ENCODE measurements at regions of chr19 and their contacts with region 1.

Region 1: DNA sequence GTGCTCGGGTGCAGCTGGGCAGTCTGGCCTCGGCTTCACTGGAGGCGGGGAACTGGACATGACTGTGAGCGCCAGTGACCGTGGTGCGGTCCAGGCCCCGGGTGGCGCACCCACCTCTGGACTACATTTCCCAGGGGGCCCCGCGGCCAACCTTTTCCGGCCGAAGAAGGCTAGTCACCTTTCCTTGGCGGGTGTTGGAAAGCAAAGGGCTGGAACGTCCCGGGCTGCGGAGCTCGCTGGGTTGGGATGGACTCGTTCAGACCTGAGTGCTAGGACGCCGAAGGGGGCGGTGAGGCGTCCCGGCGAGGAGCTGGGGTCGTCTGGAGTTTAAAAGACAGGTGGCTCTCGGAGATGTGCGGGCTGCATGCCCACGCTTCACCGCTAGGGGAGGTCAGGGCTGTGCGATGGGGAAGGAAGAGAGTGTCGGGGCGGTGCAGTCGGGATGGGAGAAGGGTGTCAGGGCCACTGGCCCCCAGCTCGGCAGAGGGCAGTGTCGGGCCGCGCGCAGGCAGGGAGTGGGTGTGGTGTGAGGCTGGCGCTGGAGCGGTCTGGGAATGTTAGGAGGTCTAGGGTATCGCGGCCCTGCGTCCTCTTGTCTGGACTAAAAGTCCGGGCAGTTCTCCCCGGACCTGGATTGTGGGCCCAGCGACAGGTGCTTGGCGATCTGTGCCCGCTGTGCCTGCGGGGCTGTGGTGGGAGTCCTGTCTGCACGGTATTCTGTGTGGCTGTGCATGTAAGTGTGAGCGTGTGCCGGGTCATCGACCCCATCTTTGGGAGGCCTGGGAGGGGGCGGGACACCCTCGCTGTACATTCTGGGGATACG is 57.1 kb downstream of the ZNF568 start:
- DNase-seq: peak; percentile 92
- ATAC-seq: peak; percentile 98
- H3K4me3 Mint-ChIP-seq: peak overlapping the region; percentile 81
- H3K27ac Mint-ChIP-seq: peak overlapping the region; percentile 92
- H3K4me1 Mint-ChIP-seq: peaks cover 6% of the 10 kb centered on the region
- H3K27me3 Mint-ChIP-seq: no peaks in the 10 kb centered on the region

Region 2: DNA sequence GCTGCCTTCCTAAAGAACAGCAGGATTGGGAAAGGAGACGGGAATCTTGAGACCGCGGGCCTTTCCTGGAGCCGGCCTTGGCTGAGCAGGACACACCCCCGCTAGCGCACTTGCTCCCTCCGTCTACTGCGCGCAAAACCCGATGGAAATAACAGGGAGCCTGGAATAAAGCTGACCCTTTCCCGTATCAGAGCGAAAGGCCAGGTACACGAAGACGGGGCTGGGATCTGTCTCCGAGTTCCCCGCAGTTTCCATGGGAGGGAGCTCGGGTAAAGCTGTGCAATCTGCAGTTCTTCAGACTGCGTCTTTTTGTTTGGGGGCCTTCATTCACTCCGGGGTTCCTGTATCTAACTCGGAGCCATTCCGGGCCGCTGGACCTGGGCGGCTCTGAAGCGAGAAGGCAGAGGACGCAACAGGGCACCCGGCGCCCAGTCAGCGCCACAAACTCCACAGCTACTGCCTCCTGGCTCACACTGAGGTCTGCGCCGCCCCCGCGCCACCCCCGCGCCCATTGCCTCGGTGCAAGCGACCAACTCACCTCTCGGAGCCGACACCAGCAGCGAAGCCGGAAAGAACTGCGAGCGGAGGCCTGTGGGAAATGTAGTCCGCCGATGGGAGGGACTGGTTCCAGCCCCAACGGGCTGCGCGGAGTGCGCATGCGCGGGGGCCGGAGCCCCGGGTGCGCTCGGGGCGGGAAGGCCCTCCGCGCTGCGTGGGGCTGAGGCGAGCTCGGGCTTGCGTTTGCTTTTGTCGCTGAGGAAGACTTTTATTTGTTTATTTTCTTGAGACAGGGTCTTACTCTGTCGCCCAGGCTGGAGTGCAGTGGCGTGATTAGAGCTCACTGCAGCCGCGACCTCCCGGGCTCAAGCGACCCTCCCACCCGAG is 594.4 kb before region 1 on chr19 and contains the start of gene ZFP14:
- CTCF ChIA-PET with region 1: no interaction called
- POLR2A ChIA-PET with region 1: no interaction called
- intact Hi-C with region 1: loop called in 1 of 2 experiments (anchors 1 kb)
- DNase-seq: peak; percentile 97
- ATAC-seq: peak; percentile 99
- H3K4me3 Mint-ChIP-seq: peak within 1 kb of the TSS; percentile 93
- H3K27ac Mint-ChIP-seq: peak within 1 kb of the TSS; percentile 88
- H3K4me1 Mint-ChIP-seq: peaks cover 18% of the 10 kb centered on the region
- H3K27me3 Mint-ChIP-seq: no peaks in the 10 kb centered on the region
- total RNA-seq, gene ZFP14: 1.4 to 1.8 TPM

Region 3: DNA sequence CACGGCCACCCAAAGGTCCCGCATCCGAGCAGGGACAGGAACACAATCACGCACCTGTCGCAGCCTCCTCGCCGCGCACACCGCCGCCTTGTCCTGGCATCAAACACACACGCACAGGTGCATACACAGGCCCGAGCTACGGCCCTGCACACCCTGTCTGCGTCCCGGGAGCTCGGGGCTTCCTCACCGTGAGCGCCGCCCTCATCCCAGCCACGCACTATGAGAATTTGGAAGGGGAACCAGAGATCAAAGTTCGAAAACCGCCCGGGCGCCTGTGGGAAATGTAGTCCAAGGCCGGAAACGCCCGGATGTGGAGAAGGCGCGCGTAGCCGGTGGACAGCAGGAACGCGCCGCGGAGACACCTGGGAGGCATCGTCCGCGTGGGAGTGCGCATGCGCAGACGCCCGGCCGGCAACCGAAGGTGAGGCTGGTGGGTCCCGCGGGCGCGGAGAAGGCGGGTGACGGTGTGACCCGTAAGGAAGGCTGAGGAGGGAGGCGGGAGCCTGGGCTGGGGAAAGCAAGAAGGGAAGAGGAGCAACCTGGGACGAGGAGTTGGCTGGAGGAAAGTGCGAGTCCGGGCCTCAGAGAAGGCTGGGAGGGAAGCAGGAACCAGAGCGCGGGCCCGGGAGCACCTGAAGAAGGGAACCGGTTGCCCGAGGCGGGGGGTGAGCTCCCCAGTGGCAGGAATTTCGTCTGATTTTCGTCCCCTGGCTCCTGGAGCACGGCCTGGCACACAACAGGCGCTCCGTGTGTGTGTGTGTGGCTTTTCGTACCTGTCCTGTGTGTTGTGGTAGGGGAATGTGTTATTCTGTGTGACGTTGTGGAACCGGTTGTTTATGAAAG is 285.8 kb before region 1 on chr19 and contains the start of gene ZNF567:
- CTCF ChIA-PET with region 1: no interaction called
- POLR2A ChIA-PET with region 1: no interaction called
- intact Hi-C with region 1: loop called in 1 of 2 experiments (anchors 1 kb)
- DNase-seq: peak; percentile 99
- ATAC-seq: peak; percentile 93
- H3K4me3 Mint-ChIP-seq: peak within 1 kb of the TSS; percentile 99
- H3K27ac Mint-ChIP-seq: peak within 1 kb of the TSS; percentile 96
- H3K4me1 Mint-ChIP-seq: peaks cover 27% of the 10 kb centered on the region
- H3K27me3 Mint-ChIP-seq: no peaks in the 10 kb centered on the region
- total RNA-seq, gene ZNF567: 7.4 to 8.6 TPM

Region 4: DNA sequence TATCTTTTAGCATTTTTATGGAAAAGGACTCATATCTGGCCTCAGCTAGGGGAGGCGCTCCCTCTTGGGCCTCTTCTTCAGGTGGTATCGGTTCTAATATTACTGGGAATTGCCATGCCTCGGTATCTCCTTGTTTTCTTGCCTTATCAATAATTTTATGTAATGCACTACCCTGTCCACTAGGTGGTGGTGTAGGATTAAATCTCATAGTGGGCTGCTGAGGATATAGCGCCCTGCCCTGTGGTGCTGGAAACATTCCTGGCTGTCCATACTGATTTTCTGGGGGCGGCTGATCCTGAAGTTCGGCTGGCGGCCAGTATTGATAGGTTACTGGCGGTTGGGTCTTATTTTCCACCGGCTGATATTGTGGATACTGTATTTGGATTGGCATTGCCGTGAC is 140.8 kb after region 1 on chr19:
- CTCF ChIA-PET with region 1: interaction called, 3 read pairs
- POLR2A ChIA-PET with region 1: no interaction called
- intact Hi-C with region 1: loop called in 1 of 2 experiments (anchors 1 kb)
- DNase-seq: no peak
- ATAC-seq: no peak
- H3K4me3 Mint-ChIP-seq: no peak overlapping the region
- H3K27ac Mint-ChIP-seq: no peak overlapping the region
- H3K4me1 Mint-ChIP-seq: no peaks in the 10 kb centered on the region
- H3K27me3 Mint-ChIP-seq: no peaks in the 10 kb centered on the region

Region 5: GRCh38 chr19:37227996-37228395 is 254.8 kb after region 1 on chr19:
- CTCF ChIA-PET with region 1: no interaction called
- POLR2A ChIA-PET with region 1: no interaction called
- intact Hi-C with region 1: loop called in 1 of 2 experiments (anchors 1 kb)
- DNase-seq: peak; percentile 59
- ATAC-seq: no peak
- H3K4me3 Mint-ChIP-seq: no peak overlapping the region
- H3K27ac Mint-ChIP-seq: no peak overlapping the region
- H3K4me1 Mint-ChIP-seq: no peaks in the 10 kb centered on the region
- H3K27me3 Mint-ChIP-seq: no peaks in the 10 kb centered on the region

Region 6: DNA sequence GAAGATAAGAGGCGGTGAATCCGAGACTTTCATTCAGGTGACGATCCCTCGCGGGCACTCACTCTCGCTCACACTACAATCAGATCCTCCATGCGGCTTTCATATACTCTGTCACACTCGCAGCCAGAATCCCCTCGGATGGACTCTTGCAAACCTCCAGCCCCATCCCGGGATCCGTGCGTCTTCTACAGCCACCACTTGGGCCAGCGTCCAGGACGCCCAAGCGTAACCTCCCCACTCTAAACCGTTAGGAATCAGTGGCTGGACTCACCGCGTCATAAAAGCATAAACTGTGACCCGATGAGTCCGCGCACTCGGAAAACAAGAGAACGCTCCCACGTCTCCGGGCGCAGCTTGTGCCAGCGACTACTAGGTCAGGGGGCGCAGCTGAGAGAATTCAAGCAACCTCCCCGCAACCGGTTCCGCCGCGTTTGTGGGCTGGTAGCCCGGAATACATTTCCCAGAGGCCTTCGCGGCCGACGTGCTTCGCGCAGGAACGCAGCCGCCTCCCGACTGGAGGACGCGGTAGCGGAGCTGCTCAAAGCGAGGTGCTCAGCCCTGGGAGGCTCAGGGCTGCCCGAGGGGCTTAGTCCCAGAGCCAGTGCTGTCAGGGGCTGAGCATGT is 718.8 kb after region 1 on chr19:
- CTCF ChIA-PET with region 1: no interaction called
- POLR2A ChIA-PET with region 1: no interaction called
- intact Hi-C with region 1: loop called in 1 of 2 experiments (anchors 5 kb)
- DNase-seq: peak; percentile 93
- ATAC-seq: peak; percentile 96
- H3K4me3 Mint-ChIP-seq: peak overlapping the region; percentile 92
- H3K27ac Mint-ChIP-seq: peak overlapping the region; percentile 95
- H3K4me1 Mint-ChIP-seq: peaks cover 9% of the 10 kb centered on the region
- H3K27me3 Mint-ChIP-seq: no peaks in the 10 kb centered on the region

Measured in activated CD4-positive, alpha-beta T cell treated with anti-CD3 and anti-CD28 coated beads for 36 hours (primary cell).